ENCODE measurements at regions of chr2 and their contacts with region 1.

Region 1: GRCh38 chr2:8125741-8126711 is 555.8 kb upstream of the ID2 start:
- DNase-seq: peak; percentile 100
- ATAC-seq: peak; percentile 92
- H3K4me3 ChIP-seq: peak overlapping the region in 2 of 3 experiments; percentile 12 to 60; a peak in 2 of 6 replicates
- H3K27ac ChIP-seq: peak overlapping the region; percentile 100
- H3K4me1 ChIP-seq: peaks cover 67% of the 10 kb centered on the region
- H3K27me3 ChIP-seq: no peaks in the 10 kb centered on the region
- CTCF ChIP-seq: peak; percentile 36
- EP300 ChIP-seq: peak; percentile 100
- POLR2A ChIP-seq: peak; percentile 70 to 94
- RAD21 ChIP-seq: peak; percentile 25; the same call in 1 of the 2 replicates

Region 2: DNA sequence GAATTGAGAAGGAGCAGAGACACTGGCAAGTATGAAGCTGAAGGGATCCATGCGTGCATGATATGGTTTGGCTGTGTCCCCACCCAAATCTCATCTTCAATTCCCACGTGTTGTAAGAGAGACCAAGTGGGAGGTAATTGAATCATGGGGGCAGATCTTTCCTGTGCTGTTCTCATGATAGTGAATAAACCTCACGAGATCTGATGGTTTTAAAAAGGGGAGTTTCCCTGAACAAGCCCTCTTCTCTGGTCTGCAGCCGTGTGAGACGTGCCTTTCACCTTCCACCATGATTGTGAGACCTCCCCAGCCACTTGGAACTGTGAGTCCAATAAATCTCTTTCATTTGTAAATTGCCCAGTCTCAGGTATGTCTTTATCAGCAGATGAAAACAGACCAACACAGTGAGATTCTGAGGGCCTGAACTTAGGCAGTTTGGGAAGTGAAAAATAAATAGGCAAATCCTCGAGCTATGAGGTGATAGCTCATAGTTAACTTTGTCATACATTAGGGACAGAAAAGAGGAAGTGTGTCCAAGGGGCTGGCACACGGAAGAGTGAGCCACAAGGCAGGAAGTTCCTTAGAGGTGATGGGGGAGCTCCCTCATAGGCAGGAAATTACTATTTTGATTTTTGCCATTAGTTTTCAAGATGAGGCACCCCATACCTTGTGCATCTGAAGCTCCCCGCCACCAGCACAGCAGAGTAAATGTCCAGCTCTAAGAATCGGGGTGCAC is 103.0 kb before region 1 on chr2:
- CTCF ChIA-PET with region 1: no interaction called
- POLR2A ChIA-PET with region 1: no interaction called
- in situ Hi-C with region 1: no loop called
- intact Hi-C with region 1: no loop called
- DNase-seq: no peak
- ATAC-seq: no peak
- H3K4me3 ChIP-seq: no peak overlapping the region
- H3K27ac ChIP-seq: no peak overlapping the region
- H3K4me1 ChIP-seq: no peaks in the 10 kb centered on the region
- H3K27me3 ChIP-seq: peaks cover 0 to 32% of the 10 kb centered on the region in 2 experiments
- CTCF ChIP-seq: no peak
- EP300 ChIP-seq: no peak
- POLR2A ChIP-seq: no peak
- RAD21 ChIP-seq: no peak

Region 3: DNA sequence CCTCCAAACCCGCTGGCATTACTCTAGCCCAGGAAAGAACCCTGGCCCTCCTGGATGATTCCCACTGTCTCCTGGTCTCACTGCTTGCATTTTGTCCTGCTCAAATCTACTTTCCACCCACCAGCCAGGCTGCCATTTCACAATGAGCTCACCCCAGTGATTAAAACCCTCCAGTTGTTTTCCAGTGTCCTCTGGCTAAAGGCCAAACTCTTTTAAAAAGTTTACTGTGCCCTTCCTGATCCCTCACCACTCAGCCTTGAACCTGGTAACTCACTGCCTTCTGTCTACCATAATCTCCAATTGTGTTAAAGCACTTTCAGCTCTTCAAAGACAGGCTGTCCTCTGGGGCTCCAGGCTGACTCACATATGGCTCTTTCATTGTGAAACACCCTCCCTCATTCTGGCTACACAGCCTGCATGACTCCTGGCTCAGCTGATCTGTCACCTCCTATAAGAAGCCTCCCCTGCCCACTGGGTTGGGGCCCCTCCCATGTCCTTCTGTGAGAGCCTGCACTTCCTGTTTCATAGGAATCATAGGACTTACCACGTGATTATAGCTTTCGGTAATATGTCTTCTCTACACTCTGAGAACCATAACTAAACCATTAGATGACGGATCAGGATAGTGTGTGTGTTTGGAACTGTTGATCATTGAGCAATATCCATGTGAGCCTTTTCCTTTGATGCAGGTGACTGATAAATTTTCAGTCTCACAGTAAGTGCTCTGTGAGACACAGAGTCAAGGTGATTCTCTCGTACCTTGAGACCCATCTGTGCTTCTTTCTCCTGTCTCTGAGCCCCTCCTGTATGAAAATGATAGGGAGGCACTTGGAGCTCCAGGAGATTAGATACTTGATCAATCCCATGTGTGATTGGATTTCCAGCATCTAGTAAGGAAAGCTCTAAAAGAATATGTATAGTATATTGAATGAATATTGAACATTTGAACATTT is 35.0 kb before region 1 on chr2:
- CTCF ChIA-PET with region 1: no interaction called
- POLR2A ChIA-PET with region 1: interaction called, 44 read pairs
- in situ Hi-C with region 1: no loop called
- intact Hi-C with region 1: loop called (anchors 1 kb)
- DNase-seq: peak; percentile 99
- ATAC-seq: peak; percentile 100
- H3K4me3 ChIP-seq: no peak overlapping the region
- H3K27ac ChIP-seq: peak overlapping the region; percentile 87
- H3K4me1 ChIP-seq: peaks cover 54% of the 10 kb centered on the region
- H3K27me3 ChIP-seq: no peaks in the 10 kb centered on the region
- CTCF ChIP-seq: no peak
- EP300 ChIP-seq: peak; percentile 80 to 92
- POLR2A ChIP-seq: peak; percentile 56 to 61; a peak in 3 of 4 replicates
- RAD21 ChIP-seq: peak; percentile 28

Region 4: GRCh38 chr2:8138923-8139667 is 13.1 kb after region 1 on chr2:
- CTCF ChIA-PET with region 1: no interaction called
- POLR2A ChIA-PET with region 1: interaction called, 99 read pairs
- in situ Hi-C with region 1: no loop called
- intact Hi-C with region 1: loop called (anchors 1 kb)
- DNase-seq: peak; percentile 99
- ATAC-seq: peak; percentile 98
- H3K4me3 ChIP-seq: peak overlapping the region; percentile 42 to 63 (median 46); a peak in 5 of 6 replicates
- H3K27ac ChIP-seq: peak overlapping the region; percentile 98
- H3K4me1 ChIP-seq: peaks cover 100% of the 10 kb centered on the region
- H3K27me3 ChIP-seq: no peaks in the 10 kb centered on the region
- CTCF ChIP-seq: no peak
- EP300 ChIP-seq: peak; percentile 94 to 99
- POLR2A ChIP-seq: peak; percentile 69 to 89
- RAD21 ChIP-seq: peak; percentile 49

Region 5: DNA sequence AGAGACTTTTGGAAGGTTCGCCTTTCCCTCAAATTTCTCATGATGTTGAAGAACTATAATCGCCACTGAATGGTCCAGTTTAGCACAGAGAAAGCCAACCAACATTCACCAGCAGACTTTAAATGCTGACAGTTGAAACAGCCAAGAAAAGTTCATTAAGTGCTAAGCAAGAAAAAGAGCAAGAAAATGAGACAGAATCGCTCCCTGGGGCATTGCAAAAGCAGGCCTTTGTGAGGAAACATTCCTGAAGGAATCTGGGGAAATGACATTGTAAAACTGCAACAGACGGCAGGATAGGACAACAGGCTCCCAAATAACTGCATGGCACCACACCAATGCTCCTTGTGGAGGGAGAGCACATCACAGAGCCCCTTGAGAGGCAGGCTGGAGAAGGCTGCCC is 286.6 kb after region 1 on chr2:
- CTCF ChIA-PET with region 1: no interaction called
- POLR2A ChIA-PET with region 1: interaction called, 3 read pairs
- in situ Hi-C with region 1: no loop called
- intact Hi-C with region 1: loop called (anchors 5 kb)
- DNase-seq: no peak
- ATAC-seq: no peak; the same call in 2 of the 3 replicates
- H3K4me3 ChIP-seq: no peak overlapping the region
- H3K27ac ChIP-seq: peak overlapping the region; percentile 80
- H3K4me1 ChIP-seq: peaks cover 72% of the 10 kb centered on the region
- H3K27me3 ChIP-seq: no peaks in the 10 kb centered on the region; a peak in 1 of 5 replicates
- CTCF ChIP-seq: no peak
- EP300 ChIP-seq: no peak
- POLR2A ChIP-seq: no peak
- RAD21 ChIP-seq: no peak